Caco-2 (cell line): ENCODE measurements at regions of chr12 and their contacts with region 1.

Region 1: DNA sequence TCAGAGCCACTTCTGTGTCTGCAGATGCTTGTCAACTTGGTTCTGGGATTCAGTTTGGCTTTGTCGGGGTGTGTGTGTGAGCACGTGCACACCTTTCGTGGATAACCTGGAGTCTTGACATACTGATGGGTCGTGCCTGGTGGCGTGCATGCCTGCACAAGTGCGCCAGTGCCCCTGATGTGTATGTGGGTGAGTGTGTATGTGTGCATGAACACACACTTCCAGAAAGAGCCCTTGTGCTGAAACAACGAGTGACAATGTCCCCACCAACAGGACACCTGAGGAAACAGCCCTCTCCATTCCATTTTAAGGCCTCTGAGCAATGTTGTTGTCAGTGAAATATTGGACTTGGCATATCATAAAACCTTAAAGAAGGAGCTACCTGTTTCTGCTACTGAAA is 53.9 kb downstream of the SMUG1 start:
- DNase-seq: peak; percentile 57 to 62
- H3K4me3 ChIP-seq: no peak overlapping the region
- H3K4me3 Mint-ChIP-seq: peak overlapping the region; percentile 14
- H3K27ac Mint-ChIP-seq: peak overlapping the region; percentile 71
- H3K4me1 ChIP-seq: peaks cover 80% of the 10 kb centered on the region
- H3K4me1 Mint-ChIP-seq: peaks cover 36% of the 10 kb centered on the region
- H3K27me3 ChIP-seq: no peaks in the 10 kb centered on the region
- H3K27me3 Mint-ChIP-seq: no peaks in the 10 kb centered on the region
- CTCF ChIP-seq: peak; percentile 37 to 57

Region 2: GRCh38 chr12:53984901-53985709 is 149.7 kb before region 1 on chr12 and contains the start of gene HOXC10:
- CTCF ChIA-PET with region 1: interaction called, 15 read pairs
- POLR2A ChIA-PET with region 1: no interaction called
- intact Hi-C with region 1: no loop called
- DNase-seq: peak; percentile 90 to 92
- H3K4me3 ChIP-seq: peak within 1 kb of the TSS; percentile 52
- H3K4me3 Mint-ChIP-seq: peak within 1 kb of the TSS; percentile 77
- H3K27ac Mint-ChIP-seq: peak within 1 kb of the TSS; percentile 81
- H3K4me1 ChIP-seq: peaks cover 41% of the 10 kb centered on the region
- H3K4me1 Mint-ChIP-seq: peaks cover 29% of the 10 kb centered on the region
- H3K27me3 ChIP-seq: no peaks in the 10 kb centered on the region
- H3K27me3 Mint-ChIP-seq: no peaks in the 10 kb centered on the region
- CTCF ChIP-seq: peak; percentile 77 to 83
- total RNA-seq, gene HOXC10: 4.0 and 4.5 TPM in 2 replicates

Region 3: GRCh38 chr12:54040148-54040494 is 94.7 kb before region 1 on chr12:
- CTCF ChIA-PET with region 1: interaction called, 13 read pairs
- POLR2A ChIA-PET with region 1: no interaction called
- intact Hi-C with region 1: no loop called
- DNase-seq: peak in 1 of 2 experiments; percentile 44
- H3K4me3 ChIP-seq: no peak overlapping the region
- H3K4me3 Mint-ChIP-seq: no peak overlapping the region
- H3K27ac Mint-ChIP-seq: no peak overlapping the region
- H3K4me1 ChIP-seq: peaks cover 20% of the 10 kb centered on the region
- H3K4me1 Mint-ChIP-seq: peaks cover 25% of the 10 kb centered on the region
- H3K27me3 ChIP-seq: no peaks in the 10 kb centered on the region
- H3K27me3 Mint-ChIP-seq: no peaks in the 10 kb centered on the region
- CTCF ChIP-seq: no peak

Region 4: DNA sequence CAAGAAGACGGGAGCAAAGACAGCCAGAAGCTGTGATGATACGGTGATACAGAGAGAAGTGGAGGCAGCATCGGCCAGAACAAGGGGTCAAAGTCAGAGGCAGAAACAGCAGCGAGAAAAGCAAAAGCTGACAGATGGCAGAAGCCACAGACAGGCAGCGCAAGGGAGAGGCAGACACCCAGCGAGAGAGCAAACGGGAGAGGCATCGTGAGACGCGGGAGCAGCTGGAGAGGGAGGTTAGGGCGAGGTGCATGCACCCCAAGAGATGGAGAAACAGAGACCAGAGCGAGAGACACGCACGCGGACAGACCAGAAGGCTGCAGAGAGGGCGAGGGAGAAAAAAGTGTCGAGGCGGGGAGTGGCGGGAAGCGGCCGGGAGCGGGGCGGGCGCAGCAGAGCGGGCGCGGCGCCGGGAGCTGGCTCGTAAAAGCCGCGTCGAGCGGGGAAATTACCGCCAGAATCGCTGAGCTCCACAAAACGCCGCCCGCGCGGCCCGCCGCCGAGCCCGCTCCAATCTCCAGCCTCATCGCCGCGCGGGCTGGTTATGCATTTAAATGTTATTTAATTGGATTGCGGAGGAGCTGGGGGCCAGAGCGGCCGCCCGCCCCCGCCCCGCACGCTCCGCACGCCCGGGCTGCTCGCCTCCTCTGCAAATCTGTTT is 38.3 kb after region 1 on chr12:
- CTCF ChIA-PET with region 1: interaction called, 10 read pairs
- POLR2A ChIA-PET with region 1: no interaction called
- intact Hi-C with region 1: loop called (anchors 1 kb)
- DNase-seq: peak in 1 of 2 experiments; percentile 49
- H3K4me3 ChIP-seq: peak overlapping the region; percentile 43
- H3K4me3 Mint-ChIP-seq: no peak overlapping the region
- H3K27ac Mint-ChIP-seq: no peak overlapping the region
- H3K4me1 ChIP-seq: no peaks in the 10 kb centered on the region
- H3K4me1 Mint-ChIP-seq: peaks cover 9% of the 10 kb centered on the region
- H3K27me3 ChIP-seq: no peaks in the 10 kb centered on the region; the same call in 1 of the 2 replicates
- H3K27me3 Mint-ChIP-seq: peaks cover 4% of the 10 kb centered on the region
- CTCF ChIP-seq: no peak

Region 5: GRCh38 chr12:54201001-54201794 is 66.3 kb after region 1 on chr12:
- CTCF ChIA-PET with region 1: interaction called, 28 read pairs
- POLR2A ChIA-PET with region 1: no interaction called
- intact Hi-C with region 1: no loop called
- DNase-seq: peak; percentile 84 to 90
- H3K4me3 ChIP-seq: no peak overlapping the region
- H3K4me3 Mint-ChIP-seq: no peak overlapping the region
- H3K27ac Mint-ChIP-seq: no peak overlapping the region
- H3K4me1 ChIP-seq: no peaks in the 10 kb centered on the region
- H3K4me1 Mint-ChIP-seq: peaks cover 8% of the 10 kb centered on the region
- H3K27me3 ChIP-seq: no peaks in the 10 kb centered on the region
- H3K27me3 Mint-ChIP-seq: no peaks in the 10 kb centered on the region
- CTCF ChIP-seq: peak; percentile 93 to 97